HCT116 (cell line): ENCODE measurements at regions of chr4 and their contacts with region 1.

Region 1: DNA sequence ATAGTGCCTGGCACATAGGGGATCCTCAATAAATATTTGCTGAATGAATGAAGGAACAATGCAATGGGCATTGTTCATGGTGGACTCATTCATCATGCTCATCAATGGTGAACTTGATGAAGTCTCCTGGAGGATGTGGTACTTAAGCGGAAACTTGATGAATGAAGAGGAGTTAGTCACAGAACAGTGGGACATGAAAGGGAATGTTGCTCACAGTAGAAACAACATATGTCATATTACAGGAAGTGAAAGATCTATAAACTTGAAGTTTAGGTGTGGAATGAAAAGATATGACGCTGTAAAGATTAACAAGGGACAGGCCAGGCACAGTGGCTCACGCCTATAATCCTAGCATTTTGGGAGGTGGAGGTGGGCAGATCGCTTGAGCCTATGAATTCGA is 224.1 kb downstream of the PPP3CA start:
- DNase-seq: peak; percentile 94
- ATAC-seq: peak; percentile 74
- H3K4me3 ChIP-seq: no peak overlapping the region
- H3K27ac ChIP-seq: peak overlapping the region; percentile 96
- H3K4me1 ChIP-seq: peaks cover 84 to 97% of the 10 kb centered on the region in 2 experiments
- H3K27me3 ChIP-seq: no peaks in the 10 kb centered on the region
- CTCF ChIP-seq: no peak
- POLR2A ChIP-seq: no peak
- RAD21 ChIP-seq: peak; percentile 25; the same call in 1 of the 2 replicates

Region 2: GRCh38 chr4:100555611-100556337 is 567.5 kb before region 1 on chr4:
- CTCF ChIA-PET with region 1: no interaction called
- POLR2A ChIA-PET with region 1: no interaction called
- RAD21 ChIA-PET with region 1: no interaction called
- intact Hi-C with region 1: no loop called
- DNase-seq: no peak
- ATAC-seq: no peak
- H3K4me3 ChIP-seq: no peak overlapping the region
- H3K27ac ChIP-seq: no peak overlapping the region
- H3K4me1 ChIP-seq: no peaks in the 10 kb centered on the region
- H3K27me3 ChIP-seq: no peaks in the 10 kb centered on the region
- CTCF ChIP-seq: no peak
- POLR2A ChIP-seq: no peak
- RAD21 ChIP-seq: no peak

Region 3: DNA sequence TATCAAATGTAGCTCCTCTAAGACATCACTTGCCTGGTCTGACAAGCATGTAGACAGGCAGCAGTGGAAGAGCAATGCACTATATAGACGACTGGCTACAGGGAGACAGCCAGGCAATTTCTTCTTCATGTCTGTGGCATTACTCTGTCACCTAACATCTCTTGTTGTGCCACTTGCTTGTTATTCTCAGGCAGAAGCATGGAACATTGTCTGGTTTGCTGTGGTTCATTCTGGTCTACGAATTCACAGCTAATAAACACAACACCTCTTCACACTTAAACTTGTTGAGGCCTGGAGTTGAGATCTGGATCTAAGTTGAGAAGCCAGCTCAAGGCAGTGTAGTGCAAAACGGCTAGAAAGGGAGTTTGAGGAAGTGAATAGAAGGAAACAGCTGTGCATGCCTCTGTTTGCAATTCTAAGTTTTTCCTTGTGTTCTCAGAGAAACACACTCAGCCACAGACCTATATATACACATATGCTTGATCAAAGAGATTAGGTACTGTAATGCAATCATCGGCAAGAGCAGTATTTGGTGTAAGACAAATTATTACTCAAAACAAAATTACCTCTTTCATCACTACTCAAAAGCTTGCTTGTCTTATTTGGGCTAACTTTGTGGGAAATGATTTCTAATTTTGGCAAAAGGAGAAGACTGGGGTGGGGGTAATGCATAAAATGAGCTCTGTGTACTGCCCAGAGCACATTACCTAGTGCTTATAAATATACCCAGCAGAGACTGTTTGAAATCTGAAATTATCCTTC is 19.7 kb before region 1 on chr4:
- CTCF ChIA-PET with region 1: no interaction called
- POLR2A ChIA-PET with region 1: interaction called, 11 read pairs
- RAD21 ChIA-PET with region 1: no interaction called
- intact Hi-C with region 1: no loop called
- DNase-seq: no peak
- ATAC-seq: peak; percentile 69
- H3K4me3 ChIP-seq: no peak overlapping the region
- H3K27ac ChIP-seq: peak overlapping the region; percentile 95
- H3K4me1 ChIP-seq: peaks cover 69 to 74% of the 10 kb centered on the region in 2 experiments
- H3K27me3 ChIP-seq: no peaks in the 10 kb centered on the region
- CTCF ChIP-seq: no peak
- POLR2A ChIP-seq: no peak
- RAD21 ChIP-seq: no peak

Region 4: DNA sequence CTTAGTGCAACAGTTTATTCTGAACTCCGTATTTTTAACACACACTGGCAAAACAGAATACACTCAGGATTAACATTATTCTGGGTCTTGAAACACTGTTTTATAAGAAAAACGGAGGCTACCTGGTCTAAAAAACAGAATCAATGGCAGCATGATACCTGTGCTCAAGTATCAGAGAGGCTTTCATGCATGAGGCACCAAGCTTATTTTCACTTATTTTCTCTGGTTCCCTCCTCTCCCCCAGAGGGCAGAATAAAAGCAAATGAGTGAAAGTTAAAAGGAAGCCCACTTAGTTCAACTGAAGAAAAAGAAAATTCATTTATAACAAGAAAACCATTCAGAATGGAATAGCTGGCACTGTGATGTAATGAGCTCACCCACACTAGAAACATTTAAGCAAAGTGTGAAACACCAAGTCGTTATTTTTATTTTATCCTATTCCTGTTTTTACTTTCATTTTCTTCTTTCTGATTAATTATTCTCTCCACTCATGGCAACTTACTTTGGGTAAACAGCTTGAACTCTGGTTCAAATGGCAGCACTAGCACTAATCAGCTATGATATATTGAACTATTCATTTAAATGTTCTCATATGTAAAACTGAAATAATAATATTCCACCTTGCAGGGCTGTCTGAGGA is 12.3 kb after region 1 on chr4:
- CTCF ChIA-PET with region 1: no interaction called
- POLR2A ChIA-PET with region 1: interaction called, 17 read pairs
- RAD21 ChIA-PET with region 1: interaction called in 1 of 2 experiments, 3 read pairs
- intact Hi-C with region 1: no loop called
- DNase-seq: no peak
- ATAC-seq: no peak
- H3K4me3 ChIP-seq: peak overlapping the region in 1 of 2 experiments; percentile 44; a peak in 2 of 4 replicates
- H3K27ac ChIP-seq: peak overlapping the region; percentile 98
- H3K4me1 ChIP-seq: peaks cover 47 to 54% of the 10 kb centered on the region in 2 experiments
- H3K27me3 ChIP-seq: no peaks in the 10 kb centered on the region
- CTCF ChIP-seq: no peak
- POLR2A ChIP-seq: no peak
- RAD21 ChIP-seq: no peak

Region 5: GRCh38 chr4:101160792-101161592 is 37.8 kb after region 1 on chr4:
- CTCF ChIA-PET with region 1: interaction called, 3 read pairs
- POLR2A ChIA-PET with region 1: interaction called, 26 read pairs
- RAD21 ChIA-PET with region 1: no interaction called
- intact Hi-C with region 1: no loop called
- DNase-seq: peak; percentile 84
- ATAC-seq: peak; percentile 47
- H3K4me3 ChIP-seq: peak overlapping the region in 1 of 2 experiments; percentile 3; a peak in 1 of 4 replicates
- H3K27ac ChIP-seq: peak overlapping the region; percentile 98
- H3K4me1 ChIP-seq: peaks cover 92 to 98% of the 10 kb centered on the region in 2 experiments
- H3K27me3 ChIP-seq: no peaks in the 10 kb centered on the region
- CTCF ChIP-seq: no peak
- POLR2A ChIP-seq: no peak
- RAD21 ChIP-seq: no peak